Mucosa of descending colon (tissue), 3 donors: ENCODE measurements at regions of chr9 and their contacts with region 1.

Region 1: DNA sequence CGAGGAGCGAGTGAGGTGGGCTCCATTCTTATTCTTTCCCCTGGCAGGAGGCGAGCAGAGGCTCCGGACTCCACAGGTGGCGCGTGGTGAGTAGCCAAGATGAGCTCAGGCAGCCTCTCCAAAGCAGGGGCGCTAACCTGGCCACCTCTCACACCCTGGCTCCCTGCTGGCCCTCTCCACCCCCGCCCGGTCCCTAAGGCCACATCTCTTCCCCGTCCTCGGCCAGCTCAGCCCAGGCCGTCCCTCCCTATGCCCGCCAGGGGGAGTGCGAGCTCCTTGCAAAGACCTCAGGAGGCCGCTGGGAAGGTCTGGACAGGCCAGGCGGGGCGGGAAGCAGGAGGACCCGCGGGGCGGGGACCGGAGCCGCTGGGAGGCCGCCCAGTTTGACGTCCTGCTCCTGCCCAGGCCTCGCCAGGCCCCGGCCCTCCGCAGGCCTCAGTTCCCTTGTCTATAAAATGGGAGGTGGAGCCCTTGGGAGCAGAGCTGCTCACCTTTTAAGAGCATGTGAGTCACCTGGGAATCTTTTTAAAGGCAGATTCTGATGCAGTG is 46.3 kb upstream of the GGTA1 start:
- DNase-seq: peak; percentile 93 to 96 (median 95)
- ATAC-seq: peak; percentile 98
- H3K4me3 ChIP-seq: no peak overlapping the region
- H3K4me1 ChIP-seq: peaks cover 8% of the 10 kb centered on the region
- CTCF ChIP-seq: peak; percentile 94

Region 2: GRCh38 chr9:121698627-121699570 is 152.9 kb after region 1 on chr9:
- intact Hi-C with region 1: loop called in 1 of 2 experiments (anchors 10 kb)
- DNase-seq: peak; percentile 65 to 76 (median 73)
- ATAC-seq: peak; percentile 59
- H3K4me3 ChIP-seq: no peak overlapping the region
- H3K4me1 ChIP-seq: peaks cover 10% of the 10 kb centered on the region
- CTCF ChIP-seq: no peak

Region 3: DNA sequence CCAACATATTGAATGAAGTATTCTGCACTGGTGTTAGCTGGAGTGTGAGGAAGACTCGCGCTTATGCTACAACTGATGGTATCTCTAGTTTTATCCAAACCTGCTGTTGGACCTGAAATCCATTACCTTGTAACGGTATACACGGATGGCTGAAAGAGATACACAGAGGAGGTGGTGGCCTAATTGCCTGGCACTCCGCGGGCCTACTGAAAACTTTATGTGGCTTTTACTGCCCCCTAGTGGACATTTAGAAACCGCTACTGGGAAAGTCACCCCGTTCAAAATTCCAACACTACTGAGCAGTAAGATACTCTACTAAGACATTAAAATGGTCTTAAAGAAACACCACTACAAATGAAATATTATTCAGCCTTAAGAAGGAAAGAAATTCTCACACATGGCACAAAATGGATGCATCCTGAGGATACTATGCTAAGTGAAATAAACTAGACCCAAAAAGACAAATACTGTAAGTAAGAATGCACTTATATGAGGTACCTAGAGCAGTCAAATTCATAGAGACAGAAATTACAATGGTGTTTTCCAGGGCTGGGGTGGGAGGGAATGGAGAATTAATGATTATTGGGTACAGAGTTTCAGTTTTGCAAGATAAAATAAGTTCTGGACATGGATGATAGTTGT is 446.7 kb after region 1 on chr9:
- intact Hi-C with region 1: loop called (anchors 5 kb)
- DNase-seq: peak in 2 of 3 donors; percentile 38 to 74
- ATAC-seq: peak; percentile 86
- H3K4me3 ChIP-seq: no peak overlapping the region
- H3K4me1 ChIP-seq: no peaks in the 10 kb centered on the region
- CTCF ChIP-seq: peak; percentile 56